Sciatic nerve (tissue), 2 donors: ENCODE measurements at regions of chr18 and their contacts with region 1.

Region 1: GRCh38 chr18:5237723-5238370 is 40.8 kb upstream of the AKAIN1 start:
- DNase-seq: peak; percentile 93
- ATAC-seq: peak; percentile 99

Region 2: DNA sequence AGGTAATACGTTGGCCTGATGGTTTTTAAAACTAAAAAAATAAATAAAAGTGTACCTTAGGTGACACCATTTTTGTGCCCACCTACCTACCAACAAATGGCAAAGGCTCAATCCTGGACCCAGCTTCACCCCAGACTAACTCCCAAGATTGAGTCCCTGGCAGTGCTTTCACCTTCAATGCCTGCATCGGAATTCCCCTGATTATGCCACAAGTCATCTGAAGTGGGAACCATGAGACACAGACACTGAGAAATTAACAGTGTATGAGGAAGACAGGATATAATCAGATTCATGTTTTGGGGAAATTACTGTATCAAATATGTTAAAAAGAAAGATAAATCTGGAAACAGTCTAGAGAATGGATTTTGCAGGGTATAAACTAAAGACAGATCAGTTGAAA is 16.1 kb after region 1 on chr18:
- intact Hi-C with region 1: no loop called
- DNase-seq: no peak
- ATAC-seq: no peak

Region 3: DNA sequence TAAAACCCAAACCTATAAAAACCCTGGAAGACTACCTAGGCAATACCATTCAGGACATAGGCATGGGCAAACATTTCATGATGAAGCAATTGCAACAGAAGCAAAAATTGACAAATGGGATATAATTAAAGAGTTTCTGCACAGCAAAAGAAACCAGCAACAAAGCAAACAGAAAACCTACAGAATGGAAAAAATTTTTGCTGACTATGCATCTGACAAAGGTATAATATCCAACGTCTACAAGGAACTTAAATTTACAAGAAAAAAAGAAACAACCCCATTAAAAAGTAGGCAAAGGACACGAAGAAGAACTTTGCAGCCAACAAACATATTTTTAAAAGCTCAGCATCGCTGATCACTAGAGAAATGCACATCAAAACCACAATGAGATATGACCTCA is 28.9 kb after region 1 on chr18:
- intact Hi-C with region 1: no loop called
- DNase-seq: no peak
- ATAC-seq: no peak

Region 4: DNA sequence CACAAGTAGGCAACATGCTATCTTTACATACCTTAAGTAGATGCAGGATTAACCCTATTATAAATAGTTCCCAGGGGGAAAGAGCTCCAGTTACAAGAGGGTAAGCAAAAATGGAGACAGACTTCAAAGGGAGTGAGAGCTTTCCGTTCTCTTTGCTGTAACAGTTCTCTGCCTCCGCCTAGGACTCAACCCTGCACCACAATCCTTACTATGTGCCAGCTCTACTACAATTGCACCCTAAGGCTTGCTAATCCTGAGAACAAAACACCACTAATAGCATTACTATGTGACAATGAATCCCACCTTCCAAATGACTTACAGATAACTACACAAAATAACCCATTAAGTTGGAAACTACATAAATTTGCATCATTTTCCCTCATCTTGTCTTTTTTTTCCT is 50.0 kb after region 1 on chr18:
- intact Hi-C with region 1: loop called (anchors 1 kb)
- DNase-seq: no peak
- ATAC-seq: no peak